ENCODE measurements at regions of chr17 and their contacts with region 1.

Region 1: GRCh38 chr17:76397687-76398487 is 13.5 kb downstream of the SPHK1 start:
- DNase-seq: peak; percentile 87
- H3K4me3 Mint-ChIP-seq: no peak overlapping the region
- H3K27ac Mint-ChIP-seq: no peak overlapping the region
- H3K4me1 Mint-ChIP-seq: no peaks in the 10 kb centered on the region
- H3K27me3 Mint-ChIP-seq: no peaks in the 10 kb centered on the region

Region 2: DNA sequence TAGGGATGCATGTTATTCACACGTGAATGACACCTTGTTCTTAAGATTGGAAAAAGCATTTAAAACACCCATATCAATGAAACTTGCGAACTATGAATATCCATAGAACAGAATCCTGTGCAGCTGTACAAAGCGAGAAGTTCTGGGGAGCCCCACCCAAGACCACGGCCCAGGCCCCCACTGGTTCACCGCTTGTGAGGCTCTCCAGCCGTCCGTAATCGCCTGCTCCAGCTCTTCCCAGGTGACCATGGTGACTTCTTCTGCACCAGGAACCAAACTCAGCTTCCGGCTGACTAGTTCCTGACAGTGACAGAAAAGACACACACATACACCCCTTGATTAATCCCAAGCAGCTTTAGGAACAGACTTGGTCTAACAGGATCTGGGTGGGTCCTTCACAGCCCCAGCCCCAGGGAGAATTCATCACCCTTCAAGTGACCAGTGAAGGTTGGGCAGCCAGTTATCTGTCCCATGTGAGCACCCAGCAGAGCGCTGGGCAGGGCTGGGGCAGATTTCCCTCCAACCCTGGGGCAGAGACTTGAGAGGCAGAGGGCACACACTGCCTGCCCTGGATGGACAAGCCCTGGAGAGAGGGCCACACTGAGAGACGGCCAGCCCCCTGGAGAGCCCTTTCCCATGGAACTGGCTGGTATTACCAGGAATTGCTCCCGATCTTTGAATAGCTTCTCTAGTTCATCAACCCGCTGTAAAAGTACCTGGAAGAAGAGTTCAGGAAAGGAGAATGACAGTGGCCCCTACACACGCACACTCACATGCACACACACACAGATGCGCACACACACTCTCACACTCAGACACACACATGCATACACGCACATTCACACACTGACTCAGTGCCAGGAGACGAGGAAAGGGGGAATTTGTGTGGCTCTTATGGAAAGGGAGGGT is 93.4 kb before region 1 on chr17:
- CTCF ChIA-PET with region 1: interaction called, 111 read pairs
- POLR2A ChIA-PET with region 1: interaction called, 4 read pairs
- DNase-seq: no peak
- H3K4me3 Mint-ChIP-seq: no peak overlapping the region
- H3K27ac Mint-ChIP-seq: no peak overlapping the region
- H3K4me1 Mint-ChIP-seq: peaks cover 1% of the 10 kb centered on the region
- H3K27me3 Mint-ChIP-seq: no peaks in the 10 kb centered on the region

Region 3: DNA sequence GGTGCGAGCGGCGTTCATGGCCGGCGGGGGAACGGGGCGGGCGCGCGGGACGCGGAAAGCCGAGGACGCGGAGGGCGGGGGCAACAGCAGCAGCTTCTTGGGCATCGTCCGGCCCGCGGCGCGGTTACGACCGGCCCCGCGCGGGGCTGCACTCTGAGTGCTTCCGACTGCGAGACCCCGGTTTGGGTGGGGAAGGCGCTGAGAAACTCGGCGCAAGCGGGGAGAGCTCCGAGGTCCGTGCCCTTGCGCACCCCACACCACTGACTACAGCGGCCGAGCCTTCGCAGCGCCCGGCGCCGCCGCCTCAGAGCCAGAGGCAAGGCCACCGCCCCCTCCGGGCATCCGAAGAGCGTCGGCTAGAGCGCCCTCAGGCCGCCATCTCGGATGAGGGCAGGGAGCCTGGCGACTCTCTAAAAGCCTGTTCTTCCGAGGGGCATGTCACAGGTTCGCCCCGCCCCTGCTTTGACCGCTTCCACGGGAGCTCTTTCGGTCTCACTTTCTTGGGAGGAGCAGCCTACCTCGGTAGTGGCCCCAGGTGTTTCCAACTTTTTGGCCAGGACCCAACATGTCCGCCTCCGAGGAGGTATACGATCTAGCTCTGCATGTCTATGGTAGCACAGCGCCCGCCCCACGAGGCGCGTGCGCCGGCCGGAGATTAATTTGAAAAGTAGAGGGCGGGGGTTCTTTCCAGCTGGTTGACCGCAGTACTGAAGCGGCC is 44.1 kb before region 1 on chr17 and contains the start of gene PRPSAP1:
- CTCF ChIA-PET with region 1: interaction called, 38 read pairs
- POLR2A ChIA-PET with region 1: interaction called, 7 read pairs
- DNase-seq: peak; percentile 84
- H3K4me3 Mint-ChIP-seq: peak within 1 kb of the TSS; percentile 94
- H3K27ac Mint-ChIP-seq: peak within 1 kb of the TSS; percentile 97
- H3K4me1 Mint-ChIP-seq: peaks cover 30% of the 10 kb centered on the region
- H3K27me3 Mint-ChIP-seq: no peaks in the 10 kb centered on the region
- total RNA-seq, gene PRPSAP1: 59.9 to 66.7 TPM

Region 4: GRCh38 chr17:76370261-76370993 is 27.5 kb before region 1 on chr17:
- CTCF ChIA-PET with region 1: interaction called, 12 read pairs
- POLR2A ChIA-PET with region 1: no interaction called
- DNase-seq: no peak
- H3K4me3 Mint-ChIP-seq: no peak overlapping the region
- H3K27ac Mint-ChIP-seq: no peak overlapping the region
- H3K4me1 Mint-ChIP-seq: peaks cover 4% of the 10 kb centered on the region
- H3K27me3 Mint-ChIP-seq: peaks cover 1% of the 10 kb centered on the region

Region 5: DNA sequence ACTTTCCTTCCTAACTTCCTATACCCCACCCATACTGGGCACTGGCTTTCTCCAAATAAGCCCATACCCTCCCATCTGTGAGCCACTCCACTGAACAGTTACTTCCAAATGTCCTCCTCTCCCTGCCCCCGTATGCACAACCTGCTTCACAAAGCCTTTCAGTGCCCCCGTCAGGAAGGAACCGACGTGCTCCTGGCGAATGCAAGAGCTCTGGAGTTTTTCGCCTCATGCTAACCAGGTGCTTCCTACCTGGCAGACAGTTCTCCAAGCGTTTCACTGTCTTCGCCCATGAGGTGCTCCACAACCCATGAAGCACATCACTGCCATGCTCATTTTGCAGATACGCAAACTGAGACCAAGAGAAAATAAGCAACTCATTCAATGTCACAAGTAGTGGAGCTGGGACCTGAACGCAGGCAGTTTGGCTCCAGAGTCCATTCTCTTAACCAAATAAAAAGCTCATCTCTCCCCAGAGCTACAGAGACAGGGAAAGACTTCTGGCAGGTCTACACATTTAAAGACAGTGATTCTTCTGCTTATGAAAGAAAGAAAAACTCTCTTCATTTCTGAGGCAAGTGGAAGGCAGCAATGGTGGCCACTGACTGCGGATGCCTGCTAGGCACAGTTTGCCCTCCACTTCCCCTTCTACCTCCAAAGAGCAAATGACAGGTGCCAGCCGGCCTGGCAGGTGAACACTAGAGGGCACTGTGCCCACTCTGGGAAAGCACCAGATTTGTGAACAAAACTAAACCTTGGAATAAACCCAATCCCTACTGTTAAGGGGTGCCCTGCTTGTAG is 10.4 kb after region 1 on chr17:
- CTCF ChIA-PET with region 1: interaction called, 51 read pairs
- POLR2A ChIA-PET with region 1: no interaction called
- DNase-seq: peak; percentile 74
- H3K4me3 Mint-ChIP-seq: no peak overlapping the region
- H3K27ac Mint-ChIP-seq: no peak overlapping the region
- H3K4me1 Mint-ChIP-seq: peaks cover 5% of the 10 kb centered on the region
- H3K27me3 Mint-ChIP-seq: no peaks in the 10 kb centered on the region

Region 6: GRCh38 chr17:76501018-76501826 is 103.3 kb after region 1 on chr17 and contains the start of gene RHBDF2:
- CTCF ChIA-PET with region 1: interaction called, 11 read pairs
- POLR2A ChIA-PET with region 1: interaction called, 3 read pairs
- DNase-seq: peak; percentile 96
- H3K4me3 Mint-ChIP-seq: peak within 1 kb of the TSS; percentile 74
- H3K27ac Mint-ChIP-seq: peak within 1 kb of the TSS; percentile 93
- H3K4me1 Mint-ChIP-seq: peaks cover 55% of the 10 kb centered on the region
- H3K27me3 Mint-ChIP-seq: no peaks in the 10 kb centered on the region
- total RNA-seq, gene RHBDF2: 33.2 to 33.8 TPM